ENCODE measurements at regions of chr16 and their contacts with region 1.

Region 1: GRCh38 chr16:78490847-78491246 is 391.4 kb downstream of the WWOX start:
- DNase-seq: peak in 9 of 10 donors; percentile 32 to 82 (median 65)
- H3K4me3 ChIP-seq: peak overlapping the region in 56 of 59 donors; percentile 9 to 64 (median 42)
- H3K27ac ChIP-seq: peak overlapping the region in 51 of 59 donors; percentile 3 to 89 (median 65)
- H3K27me3 ChIP-seq: no peaks in the 10 kb centered on the region
- CTCF ChIP-seq: no peak

Region 2: DNA sequence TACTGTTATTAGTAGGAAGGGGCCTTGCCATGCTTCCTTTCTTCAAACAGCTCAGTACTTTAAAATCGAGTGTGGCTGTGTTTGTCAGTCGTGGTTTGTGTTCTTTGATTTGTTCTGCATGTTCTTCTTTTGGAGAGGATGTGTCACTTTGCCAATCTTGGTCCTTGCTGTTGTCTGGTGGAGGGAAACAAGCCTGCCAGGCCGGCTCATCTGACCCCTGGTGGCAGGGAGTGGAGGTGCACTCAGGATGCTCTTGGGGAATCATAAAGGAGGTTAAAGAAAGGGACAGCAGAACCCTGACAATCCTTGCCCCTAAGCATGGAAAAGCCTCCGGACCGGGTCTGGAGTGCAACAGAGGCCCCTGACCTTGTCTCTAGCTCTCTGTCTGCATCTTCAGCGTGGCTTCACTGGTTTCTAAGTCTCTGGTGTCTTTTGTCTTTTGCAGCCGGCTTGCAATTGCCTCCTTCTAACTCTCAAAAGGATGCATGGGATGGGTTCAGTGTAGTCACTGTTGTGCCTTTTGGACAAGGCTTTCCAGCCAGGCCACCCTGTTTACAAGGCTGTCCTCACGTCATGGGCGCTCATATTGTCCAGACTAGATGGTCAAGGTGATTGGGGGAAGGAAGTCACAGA is 255.6 kb before region 1 on chr16:
- intact Hi-C with region 1: loop called in 1 of 2 experiments (anchors 5 kb)
- DNase-seq: peak; percentile 60 to 84 (median 76)
- H3K4me3 ChIP-seq: peak overlapping the region in 3 of 59 donors; percentile 7 to 35 (median 20)
- H3K27ac ChIP-seq: peak overlapping the region in 26 of 59 donors; percentile 2 to 79 (median 42)
- H3K27me3 ChIP-seq: no peaks in the 10 kb centered on the region
- CTCF ChIP-seq: peak; percentile 58 to 93 (median 85)

Region 3: GRCh38 chr16:78437352-78437968 is 53.4 kb before region 1 on chr16:
- intact Hi-C with region 1: no loop called
- DNase-seq: peak in 5 of 10 donors; percentile 10 to 70 (median 43)
- H3K4me3 ChIP-seq: no peak overlapping the region
- H3K27ac ChIP-seq: peak overlapping the region in 1 of 59 donors; percentile 39
- H3K27me3 ChIP-seq: no peaks in the 10 kb centered on the region
- CTCF ChIP-seq: peak; percentile 63 to 93 (median 84)